Vagina (tissue), 2 donors: ENCODE measurements at regions of chr12 and their contacts with region 1.

Region 1: DNA sequence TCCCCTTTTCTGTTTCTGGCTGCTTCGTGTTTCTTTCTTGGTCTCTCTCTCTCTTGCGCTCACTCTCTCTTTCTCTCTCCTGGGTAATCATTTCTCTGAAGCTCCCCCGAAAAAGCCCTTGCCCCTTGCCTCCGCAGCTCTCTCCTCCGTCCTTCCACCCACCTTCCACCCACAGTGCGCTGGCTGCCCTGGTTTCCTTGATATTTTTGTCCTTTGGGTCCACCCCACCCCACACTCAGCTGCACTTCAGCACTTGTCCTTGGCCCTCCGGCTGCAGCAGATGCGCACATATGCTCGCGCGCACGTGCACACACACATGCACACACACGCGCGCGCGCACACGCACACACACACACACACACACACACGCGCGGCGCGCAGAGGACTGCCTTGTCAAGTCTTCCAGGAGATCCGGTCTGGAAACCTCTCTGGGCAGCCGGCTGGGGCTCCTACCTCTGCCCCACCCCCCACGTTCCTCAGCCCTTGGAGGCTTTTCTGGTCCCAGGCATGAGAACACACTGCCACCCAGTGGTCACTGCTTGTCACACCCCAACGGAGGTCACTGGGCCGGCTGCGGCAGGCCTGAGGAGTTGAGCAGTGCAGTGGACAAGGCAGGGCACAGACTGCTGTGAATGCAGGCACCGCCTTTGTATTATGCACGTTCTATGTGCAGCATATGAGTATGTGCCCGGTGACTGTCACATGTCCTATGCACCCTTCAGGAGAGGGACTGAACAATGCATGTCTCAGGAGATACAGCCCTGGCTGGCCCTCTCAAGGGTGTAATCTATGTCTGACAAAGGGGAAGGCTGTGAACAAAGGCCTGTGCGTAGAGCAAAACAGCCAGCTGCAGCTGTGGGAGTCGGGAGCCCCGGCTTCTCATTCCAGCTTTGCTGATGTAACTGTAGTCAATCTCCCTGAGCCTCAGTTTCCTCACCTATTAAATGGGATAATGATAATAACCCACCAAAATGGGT is 6.5 kb downstream of the LAG3 start:
- DNase-seq: no peak
- H3K4me3 ChIP-seq: peak overlapping the region; percentile 40 to 51
- H3K27ac ChIP-seq: peak overlapping the region; percentile 82
- H3K4me1 ChIP-seq: peaks cover 14% of the 10 kb centered on the region
- H3K27me3 ChIP-seq: no peaks in the 10 kb centered on the region
- CTCF ChIP-seq: peak; percentile 86 to 100 (median 98)
- POLR2A ChIP-seq: no peak

Region 2: GRCh38 chr12:6735448-6736191 is 43.2 kb before region 1 on chr12:
- intact Hi-C with region 1: loop called (anchors 5 kb)
- DNase-seq: no peak
- H3K4me3 ChIP-seq: no peak overlapping the region
- H3K27ac ChIP-seq: peak overlapping the region; percentile 33
- H3K4me1 ChIP-seq: peaks cover 5% of the 10 kb centered on the region
- H3K27me3 ChIP-seq: no peaks in the 10 kb centered on the region
- CTCF ChIP-seq: peak in 2 of 3 experiments; percentile 74 to 75
- POLR2A ChIP-seq: no peak